ENCODE measurements at regions of chr18 and their contacts with region 1.

Region 1: GRCh38 chr18:79139206-79139605 is 70.0 kb downstream of the ATP9B start:
- DNase-seq: peak; percentile 77
- ATAC-seq: peak; percentile 46; the same call in 1 of the 2 replicates
- H3K4me3 ChIP-seq: no peak overlapping the region
- H3K27ac ChIP-seq: no peak overlapping the region
- H3K4me1 ChIP-seq: no peaks in the 10 kb centered on the region
- H3K27me3 ChIP-seq: no peaks in the 10 kb centered on the region
- CTCF ChIP-seq: no peak
- POLR2A ChIP-seq: no peak
- RAD21 ChIP-seq: no peak

Region 2: GRCh38 chr18:79092874-79093273 is 46.3 kb before region 1 on chr18:
- CTCF ChIA-PET with region 1: no interaction called
- POLR2A ChIA-PET with region 1: no interaction called
- dilution Hi-C with region 1: no loop called
- in situ Hi-C with region 1: no loop called
- intact Hi-C with region 1: loop called (anchors 5 kb)
- DNase-seq: no peak
- ATAC-seq: no peak
- H3K4me3 ChIP-seq: no peak overlapping the region
- H3K27ac ChIP-seq: no peak overlapping the region
- H3K4me1 ChIP-seq: peaks cover 2% of the 10 kb centered on the region; the same call in 1 of the 2 replicates
- H3K27me3 ChIP-seq: no peaks in the 10 kb centered on the region
- CTCF ChIP-seq: no peak
- POLR2A ChIP-seq: no peak
- RAD21 ChIP-seq: no peak

Region 3: DNA sequence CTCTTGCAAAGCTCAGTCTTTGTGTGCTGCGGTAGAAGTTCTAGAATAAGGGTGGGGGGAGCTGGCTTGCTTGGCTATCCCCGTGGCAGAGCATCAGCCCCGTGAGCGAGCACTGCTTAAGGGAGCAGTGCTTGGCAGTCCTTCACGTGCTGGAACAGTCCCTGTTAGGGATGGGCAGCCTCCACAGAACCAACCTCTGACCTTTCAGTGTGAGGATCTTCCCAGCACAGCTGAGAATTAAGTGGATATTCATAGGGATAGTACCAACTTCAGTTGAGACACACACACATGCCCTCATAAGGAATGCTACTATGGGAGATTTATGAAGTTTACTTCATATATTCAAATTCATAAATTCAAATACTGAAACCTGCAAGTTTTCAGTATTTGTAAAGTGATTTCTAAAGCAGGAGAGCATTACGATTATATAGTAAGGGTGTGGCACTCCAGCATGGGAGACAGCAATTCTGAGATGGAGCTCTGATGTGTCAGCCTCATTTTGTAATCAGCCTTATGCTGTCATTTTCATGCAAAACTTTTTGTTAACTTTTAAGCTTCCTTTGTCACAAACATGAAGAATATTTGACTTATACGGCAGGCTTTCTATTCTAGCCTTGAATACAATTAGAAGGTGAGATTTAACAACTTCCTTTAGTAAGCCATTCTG is 30.5 kb before region 1 on chr18:
- CTCF ChIA-PET with region 1: no interaction called
- POLR2A ChIA-PET with region 1: no interaction called
- dilution Hi-C with region 1: no loop called
- in situ Hi-C with region 1: no loop called
- intact Hi-C with region 1: loop called (anchors 5 kb)
- DNase-seq: no peak
- ATAC-seq: peak; percentile 40; the same call in 1 of the 2 replicates
- H3K4me3 ChIP-seq: no peak overlapping the region
- H3K27ac ChIP-seq: no peak overlapping the region
- H3K4me1 ChIP-seq: peaks cover 2% of the 10 kb centered on the region; the same call in 1 of the 2 replicates
- H3K27me3 ChIP-seq: no peaks in the 10 kb centered on the region
- CTCF ChIP-seq: no peak
- POLR2A ChIP-seq: no peak
- RAD21 ChIP-seq: no peak

Region 4: GRCh38 chr18:79234438-79234837 is 95.2 kb after region 1 on chr18:
- CTCF ChIA-PET with region 1: no interaction called
- POLR2A ChIA-PET with region 1: no interaction called
- dilution Hi-C with region 1: no loop called
- in situ Hi-C with region 1: no loop called
- intact Hi-C with region 1: no loop called
- DNase-seq: no peak
- ATAC-seq: no peak
- H3K4me3 ChIP-seq: no peak overlapping the region
- H3K27ac ChIP-seq: no peak overlapping the region
- H3K4me1 ChIP-seq: no peaks in the 10 kb centered on the region
- H3K27me3 ChIP-seq: no peaks in the 10 kb centered on the region
- CTCF ChIP-seq: no peak
- POLR2A ChIP-seq: no peak
- RAD21 ChIP-seq: no peak